CD8-positive, alpha-beta T cell (primary cell): ENCODE measurements at regions of chr9 and their contacts with region 1.

Region 1: GRCh38 chr9:613771-614347 is 227.6 kb upstream of the DMRT1 start:
- DNase-seq: peak in 6 of 9 experiments; percentile 2 to 58 (median 31)
- ATAC-seq: peak; percentile 26
- H3K4me3 ChIP-seq: no peak overlapping the region
- H3K4me3 Mint-ChIP-seq: no peak overlapping the region
- H3K27ac ChIP-seq: no peak overlapping the region
- H3K27ac Mint-ChIP-seq: no peak overlapping the region
- H3K4me1 ChIP-seq: no peaks in the 10 kb centered on the region
- H3K4me1 Mint-ChIP-seq: peaks cover 5% of the 10 kb centered on the region
- H3K27me3 ChIP-seq: no peaks in the 10 kb centered on the region
- H3K27me3 Mint-ChIP-seq: no peaks in the 10 kb centered on the region
- CTCF ChIP-seq: peak; percentile 64

Region 2: DNA sequence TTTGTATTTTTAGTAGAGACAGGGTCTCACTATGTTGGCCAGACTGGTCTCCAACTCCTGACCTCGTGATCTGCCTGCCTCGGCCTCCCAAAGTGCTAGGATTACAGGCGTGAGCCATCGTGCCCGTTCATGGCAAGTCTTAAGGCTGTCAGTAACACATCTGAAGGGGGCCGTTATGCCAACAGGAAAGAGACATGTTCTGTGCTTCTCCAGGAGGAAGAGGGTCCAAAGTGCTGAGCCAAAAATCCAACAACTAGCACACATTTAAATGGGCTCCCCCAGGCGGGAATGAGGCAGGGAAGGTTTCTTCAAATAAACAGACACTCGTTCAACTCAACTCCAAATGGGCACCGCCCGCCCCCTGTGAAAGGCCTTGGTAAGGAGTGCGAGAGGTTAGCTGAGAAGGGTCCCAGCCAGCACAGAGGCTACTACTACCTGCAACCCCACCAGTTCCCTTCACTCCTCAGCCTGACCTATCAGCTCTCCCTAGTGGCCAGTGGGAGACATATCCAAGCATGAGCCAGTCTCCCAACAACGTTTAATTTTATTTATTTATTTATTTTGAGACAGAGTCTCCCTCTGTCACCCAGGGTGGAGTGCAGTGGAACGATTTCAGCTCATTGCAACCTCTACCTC is 143.5 kb after region 1 on chr9:
- CTCF ChIA-PET with region 1: interaction called, 5 read pairs
- POLR2A ChIA-PET with region 1: no interaction called
- intact Hi-C with region 1: loop called in 1 of 2 experiments (anchors 2 kb)
- DNase-seq: peak in 3 of 9 experiments; percentile 21 to 36 (median 36)
- ATAC-seq: no peak
- H3K4me3 ChIP-seq: no peak overlapping the region
- H3K4me3 Mint-ChIP-seq: no peak overlapping the region
- H3K27ac ChIP-seq: no peak overlapping the region
- H3K27ac Mint-ChIP-seq: no peak overlapping the region
- H3K4me1 ChIP-seq: no peaks in the 10 kb centered on the region
- H3K4me1 Mint-ChIP-seq: no peaks in the 10 kb centered on the region
- H3K27me3 ChIP-seq: no peaks in the 10 kb centered on the region
- H3K27me3 Mint-ChIP-seq: peaks cover 4% of the 10 kb centered on the region
- CTCF ChIP-seq: no peak

Region 3: DNA sequence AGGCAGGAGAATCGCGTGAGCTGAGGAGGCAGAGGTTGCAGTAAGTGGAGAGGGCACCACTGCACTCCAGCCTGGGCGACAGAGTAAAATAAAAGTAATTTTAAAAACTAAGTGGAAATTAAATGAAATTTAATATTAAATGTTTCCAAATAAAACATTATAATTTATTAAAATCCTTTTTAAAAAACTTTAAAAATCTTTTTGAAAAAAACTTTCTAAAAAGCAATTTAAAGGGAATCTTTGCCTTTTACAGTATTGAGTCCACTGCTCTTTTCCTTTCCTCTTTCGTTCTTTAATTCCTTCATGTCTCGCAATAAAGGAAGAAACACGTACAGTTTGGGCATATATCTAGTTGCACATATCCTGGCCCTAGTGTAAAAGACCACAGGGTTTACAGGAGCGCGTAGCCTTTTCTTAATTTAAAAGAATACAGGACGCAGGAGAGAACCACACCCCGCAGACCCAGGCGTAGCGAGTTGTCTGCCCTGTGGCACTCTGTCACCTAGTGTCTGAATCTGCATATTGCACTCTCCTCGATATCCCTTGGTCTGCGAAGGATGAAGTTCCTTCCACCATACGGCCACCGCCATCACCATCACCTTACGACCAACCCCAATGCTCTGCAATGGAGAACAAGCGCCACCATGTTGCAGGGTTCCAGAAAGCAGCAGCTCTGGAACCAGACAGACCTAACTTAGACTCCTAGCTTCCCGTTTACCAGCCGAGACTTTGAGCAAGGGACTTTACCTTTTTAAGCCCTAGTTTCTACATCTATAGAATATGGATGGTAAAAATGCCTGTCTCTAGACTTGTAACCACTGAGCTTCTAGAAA is 150.0 kb after region 1 on chr9:
- CTCF ChIA-PET with region 1: interaction called, 5 read pairs
- POLR2A ChIA-PET with region 1: no interaction called
- intact Hi-C with region 1: loop called (anchors 1 to 2 kb)
- DNase-seq: peak in 5 of 9 experiments; percentile 9 to 58 (median 45)
- ATAC-seq: peak; percentile 62
- H3K4me3 ChIP-seq: no peak overlapping the region
- H3K4me3 Mint-ChIP-seq: no peak overlapping the region
- H3K27ac ChIP-seq: no peak overlapping the region
- H3K27ac Mint-ChIP-seq: no peak overlapping the region
- H3K4me1 ChIP-seq: no peaks in the 10 kb centered on the region
- H3K4me1 Mint-ChIP-seq: peaks cover 4% of the 10 kb centered on the region
- H3K27me3 ChIP-seq: no peaks in the 10 kb centered on the region
- H3K27me3 Mint-ChIP-seq: peaks cover 22% of the 10 kb centered on the region
- CTCF ChIP-seq: peak; percentile 19

Region 4: GRCh38 chr9:806285-807156 is 192.7 kb after region 1 on chr9:
- CTCF ChIA-PET with region 1: interaction called, 5 read pairs
- POLR2A ChIA-PET with region 1: no interaction called
- intact Hi-C with region 1: loop called (anchors 1 kb)
- DNase-seq: peak in 2 of 9 experiments; percentile 34 to 46
- ATAC-seq: no peak
- H3K4me3 ChIP-seq: no peak overlapping the region
- H3K4me3 Mint-ChIP-seq: no peak overlapping the region
- H3K27ac ChIP-seq: no peak overlapping the region
- H3K27ac Mint-ChIP-seq: no peak overlapping the region
- H3K4me1 ChIP-seq: no peaks in the 10 kb centered on the region
- H3K4me1 Mint-ChIP-seq: no peaks in the 10 kb centered on the region
- H3K27me3 ChIP-seq: no peaks in the 10 kb centered on the region
- H3K27me3 Mint-ChIP-seq: peaks cover 13% of the 10 kb centered on the region
- CTCF ChIP-seq: peak; percentile 41

Region 5: GRCh38 chr9:1009101-1009707 is 395.3 kb after region 1 on chr9:
- CTCF ChIA-PET with region 1: no interaction called
- POLR2A ChIA-PET with region 1: no interaction called
- intact Hi-C with region 1: loop called in 1 of 2 experiments (anchors 2 kb)
- DNase-seq: peak; percentile 49 to 74 (median 65)
- ATAC-seq: peak; percentile 74
- H3K4me3 ChIP-seq: no peak overlapping the region
- H3K4me3 Mint-ChIP-seq: no peak overlapping the region
- H3K27ac ChIP-seq: no peak overlapping the region
- H3K27ac Mint-ChIP-seq: no peak overlapping the region
- H3K4me1 ChIP-seq: no peaks in the 10 kb centered on the region
- H3K4me1 Mint-ChIP-seq: no peaks in the 10 kb centered on the region
- H3K27me3 ChIP-seq: peaks cover 0 to 2% of the 10 kb centered on the region in 2 experiments
- H3K27me3 Mint-ChIP-seq: peaks cover 37% of the 10 kb centered on the region
- CTCF ChIP-seq: peak; percentile 78